Transverse colon (tissue), 4 donors: ENCODE measurements at regions of chr7 and their contacts with region 1.

Region 1: GRCh38 chr7:100803398-100804233 is 23.7 kb downstream of the EPHB4 start:
- DNase-seq: peak; percentile 82
- H3K4me3 ChIP-seq: peak overlapping the region in 1 of 4 donors; percentile 31
- H3K27ac ChIP-seq: peak overlapping the region; percentile 70 to 79 (median 72)
- H3K4me1 ChIP-seq: peaks cover 23 to 43% (median 26%) of the 10 kb centered on the region in 4 donors
- H3K27me3 ChIP-seq: no peaks in the 10 kb centered on the region
- CTCF ChIP-seq: no peak
- EP300 ChIP-seq: no peak
- POLR2A ChIP-seq: no peak

Region 2: GRCh38 chr7:100852048-100852872 is 48.6 kb after region 1 on chr7 and contains the start of gene SLC12A9:
- in situ Hi-C with region 1: loop called in 2 of 4 experiments (anchors 5 to 10 kb)
- intact Hi-C with region 1: loop called (anchors 2 kb)
- DNase-seq: peak; percentile 93
- H3K4me3 ChIP-seq: peak within 1 kb of the TSS; percentile 49 to 83 (median 68)
- H3K27ac ChIP-seq: peak within 1 kb of the TSS; percentile 76 to 85 (median 80)
- H3K4me1 ChIP-seq: peaks cover 0 to 20% (median 14%) of the 10 kb centered on the region in 4 donors
- H3K27me3 ChIP-seq: no peaks in the 10 kb centered on the region
- CTCF ChIP-seq: peak; percentile 93 to 96 (median 94)
- EP300 ChIP-seq: no peak
- POLR2A ChIP-seq: peak; percentile 53
- total RNA-seq, gene SLC12A9: 21.0 to 46.2 (median 23.1) TPM

Region 3: DNA sequence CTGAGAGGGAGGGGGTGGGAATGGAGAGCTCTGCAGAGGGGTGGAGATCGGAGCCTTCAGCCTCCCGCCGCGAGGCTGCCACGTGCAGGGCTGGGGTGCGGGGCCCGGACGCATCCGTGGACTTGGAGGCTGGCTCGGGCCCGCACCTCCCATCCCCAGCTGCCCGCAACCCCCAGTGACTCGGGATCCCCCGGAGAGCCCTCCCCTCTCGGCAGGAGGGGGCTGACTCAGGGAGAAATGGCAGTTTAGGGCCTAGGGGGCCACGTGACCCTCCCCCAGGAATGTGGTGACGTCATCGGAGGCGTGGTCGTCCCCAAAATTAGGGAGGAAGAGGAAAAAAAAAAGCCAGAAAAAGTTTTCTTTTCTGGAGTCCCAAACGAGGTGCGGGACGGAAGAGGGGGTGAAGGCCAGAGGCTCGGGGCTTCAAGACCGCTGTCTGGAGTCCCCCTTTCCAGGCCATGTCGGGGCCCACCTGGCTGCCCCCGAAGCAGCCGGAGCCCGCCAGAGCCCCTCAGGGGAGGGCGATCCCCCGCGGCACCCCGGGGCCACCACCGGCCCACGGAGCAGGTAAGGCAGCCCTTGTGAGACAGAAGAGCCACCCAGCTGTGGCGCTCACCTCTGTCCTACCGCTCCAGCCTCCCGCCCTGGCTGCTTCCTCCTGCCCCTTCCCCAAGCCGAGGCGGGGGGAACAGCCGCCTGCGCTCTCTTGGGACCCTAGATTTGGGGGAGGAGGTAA is 63.6 kb after region 1 on chr7 and contains the start of gene TRIP6:
- in situ Hi-C with region 1: no loop called
- intact Hi-C with region 1: no loop called
- DNase-seq: peak; percentile 87
- H3K4me3 ChIP-seq: peak within 1 kb of the TSS; percentile 67 to 74 (median 70)
- H3K27ac ChIP-seq: peak within 1 kb of the TSS; percentile 92 to 97 (median 96)
- H3K4me1 ChIP-seq: peaks cover 11 to 39% (median 34%) of the 10 kb centered on the region in 4 donors
- H3K27me3 ChIP-seq: no peaks in the 10 kb centered on the region
- CTCF ChIP-seq: no peak
- EP300 ChIP-seq: no peak
- POLR2A ChIP-seq: no peak
- total RNA-seq, gene TRIP6: 10.9 to 24.3 (median 21.2) TPM